ENCODE measurements at regions of chr14 and their contacts with region 1.

Region 1: GRCh38 chr14:75258615-75259466 is 19.8 kb upstream of the FOS start:
- DNase-seq: peak; percentile 100
- H3K4me3 ChIP-seq: peak overlapping the region; percentile 75
- H3K4me3 Mint-ChIP-seq: peak overlapping the region; percentile 77 to 95 (median 89)
- H3K27ac ChIP-seq: peak overlapping the region; percentile 99
- H3K27ac Mint-ChIP-seq: peak overlapping the region; percentile 99 to 100 (median 99)
- H3K4me1 ChIP-seq: peaks cover 24% of the 10 kb centered on the region
- H3K4me1 Mint-ChIP-seq: peaks cover 22 to 35% (median 31%) of the 10 kb centered on the region in 3 donors
- H3K27me3 ChIP-seq: no peaks in the 10 kb centered on the region
- H3K27me3 Mint-ChIP-seq: peaks cover 5 to 8% of the 10 kb centered on the region in 2 donors

Region 2: GRCh38 chr14:73713803-73714655 is 1544.8 kb before region 1 on chr14 and contains the start of gene PNMA1:
- CTCF ChIA-PET with region 1: no interaction called
- POLR2A ChIA-PET with region 1: no interaction called
- DNase-seq: peak; percentile 84 to 92 (median 86)
- H3K4me3 ChIP-seq: peak within 1 kb of the TSS; percentile 75
- H3K4me3 Mint-ChIP-seq: peak within 1 kb of the TSS; percentile 91 to 99 (median 95)
- H3K27ac ChIP-seq: peak within 1 kb of the TSS; percentile 64
- H3K27ac Mint-ChIP-seq: peak within 1 kb of the TSS; percentile 93 to 98 (median 98)
- H3K4me1 ChIP-seq: peaks cover 6% of the 10 kb centered on the region
- H3K4me1 Mint-ChIP-seq: peaks cover 29 to 36% (median 34%) of the 10 kb centered on the region in 3 donors
- H3K27me3 ChIP-seq: no peaks in the 10 kb centered on the region
- H3K27me3 Mint-ChIP-seq: no peaks in the 10 kb centered on the region
- total RNA-seq, gene PNMA1: 56.8 to 61.0 TPM

Region 3: GRCh38 chr14:74573421-74574089 is 685.3 kb before region 1 on chr14:
- CTCF ChIA-PET with region 1: no interaction called
- POLR2A ChIA-PET with region 1: interaction called, 11 read pairs
- DNase-seq: no peak
- H3K4me3 ChIP-seq: no peak overlapping the region
- H3K4me3 Mint-ChIP-seq: peak overlapping the region in 6 of 7 donors; percentile 3 to 68 (median 25)
- H3K27ac ChIP-seq: no peak overlapping the region
- H3K27ac Mint-ChIP-seq: peak overlapping the region in 4 of 8 donors; percentile 2 to 34 (median 20)
- H3K4me1 ChIP-seq: peaks cover 39% of the 10 kb centered on the region
- H3K4me1 Mint-ChIP-seq: peaks cover 38 to 43% (median 38%) of the 10 kb centered on the region in 3 donors
- H3K27me3 ChIP-seq: peaks cover 28% of the 10 kb centered on the region
- H3K27me3 Mint-ChIP-seq: peaks cover 25 to 28% of the 10 kb centered on the region in 2 donors

Region 4: GRCh38 chr14:74841230-74842207 is 417.3 kb before region 1 on chr14:
- CTCF ChIA-PET with region 1: no interaction called
- POLR2A ChIA-PET with region 1: no interaction called
- DNase-seq: peak in 1 of 5 donors; percentile 11
- H3K4me3 ChIP-seq: no peak overlapping the region
- H3K4me3 Mint-ChIP-seq: peak overlapping the region in 6 of 7 donors; percentile 26 to 42 (median 36)
- H3K27ac ChIP-seq: no peak overlapping the region
- H3K27ac Mint-ChIP-seq: peak overlapping the region; percentile 69 to 99 (median 90)
- H3K4me1 ChIP-seq: peaks cover 68% of the 10 kb centered on the region
- H3K4me1 Mint-ChIP-seq: peaks cover 51 to 62% (median 60%) of the 10 kb centered on the region in 3 donors
- H3K27me3 ChIP-seq: no peaks in the 10 kb centered on the region
- H3K27me3 Mint-ChIP-seq: no peaks in the 10 kb centered on the region

Region 5: GRCh38 chr14:75176142-75176820 is 82.6 kb before region 1 on chr14 and contains the start of gene TMED10:
- CTCF ChIA-PET with region 1: no interaction called
- POLR2A ChIA-PET with region 1: interaction called, 10 read pairs
- DNase-seq: peak; percentile 87 to 95 (median 94)
- H3K4me3 ChIP-seq: peak within 1 kb of the TSS; percentile 87
- H3K4me3 Mint-ChIP-seq: peak within 1 kb of the TSS; percentile 86 to 98 (median 90)
- H3K27ac ChIP-seq: peak within 1 kb of the TSS; percentile 98
- H3K27ac Mint-ChIP-seq: peak within 1 kb of the TSS; percentile 97 to 100 (median 98)
- H3K4me1 ChIP-seq: peaks cover 24% of the 10 kb centered on the region
- H3K4me1 Mint-ChIP-seq: peaks cover 32 to 55% (median 53%) of the 10 kb centered on the region in 3 donors
- H3K27me3 ChIP-seq: no peaks in the 10 kb centered on the region
- H3K27me3 Mint-ChIP-seq: no peaks in the 10 kb centered on the region
- total RNA-seq, gene TMED10: 178 TPM

Region 6: GRCh38 chr14:75230140-75231045 is 28.4 kb before region 1 on chr14:
- CTCF ChIA-PET with region 1: interaction called, 10 read pairs
- POLR2A ChIA-PET with region 1: interaction called, 3 read pairs
- DNase-seq: peak; percentile 44 to 82 (median 54)
- H3K4me3 ChIP-seq: peak overlapping the region; percentile 14
- H3K4me3 Mint-ChIP-seq: peak overlapping the region; percentile 2 to 76 (median 65)
- H3K27ac ChIP-seq: peak overlapping the region; percentile 45
- H3K27ac Mint-ChIP-seq: peak overlapping the region; percentile 66 to 98 (median 86)
- H3K4me1 ChIP-seq: peaks cover 58% of the 10 kb centered on the region
- H3K4me1 Mint-ChIP-seq: peaks cover 55 to 59% (median 58%) of the 10 kb centered on the region in 3 donors
- H3K27me3 ChIP-seq: no peaks in the 10 kb centered on the region
- H3K27me3 Mint-ChIP-seq: peaks cover 0 to 1% of the 10 kb centered on the region in 2 donors

Region 7: DNA sequence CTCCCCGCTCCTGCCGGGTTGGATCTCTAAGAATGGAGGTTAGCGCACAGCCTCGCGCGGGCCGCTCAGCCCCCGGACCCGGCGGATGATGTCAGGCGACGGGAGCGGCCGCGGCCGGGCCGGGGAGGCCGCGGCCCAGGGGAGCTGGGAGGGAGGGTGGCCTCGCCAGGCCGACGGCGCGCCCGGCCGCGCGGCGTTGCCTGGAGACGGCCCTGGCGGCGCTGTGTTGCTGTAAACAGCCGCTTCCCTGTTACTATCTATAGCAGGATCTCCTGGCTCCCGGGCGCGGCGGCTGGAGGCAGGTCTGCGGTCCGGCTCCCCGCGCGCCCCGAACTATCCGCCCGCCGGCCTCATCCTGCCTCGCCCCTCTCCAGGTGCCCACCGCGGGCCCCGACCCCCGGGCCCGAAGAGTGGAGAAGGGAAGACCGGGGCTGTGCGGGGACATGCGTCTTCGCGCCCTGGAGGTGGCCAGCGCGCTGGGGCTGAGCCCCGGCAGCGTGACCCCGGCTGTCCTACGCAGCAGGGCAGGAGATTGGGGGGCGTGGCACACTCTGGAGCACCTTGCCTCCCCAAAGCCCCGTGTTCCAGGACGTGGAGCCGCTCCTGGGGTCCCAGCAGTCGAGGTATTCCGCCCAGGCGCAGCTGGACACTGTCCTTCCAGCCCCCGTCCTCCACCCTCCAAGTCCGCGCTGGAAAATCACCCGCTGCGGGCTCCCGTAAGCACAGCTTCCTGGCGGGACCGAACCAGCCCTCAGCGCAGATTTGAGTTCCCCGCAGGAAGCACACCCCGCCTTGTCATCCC is 18.4 kb after region 1 on chr14:
- CTCF ChIA-PET with region 1: interaction called, 5 read pairs
- POLR2A ChIA-PET with region 1: interaction called, 12 read pairs
- DNase-seq: peak; percentile 68 to 88 (median 76)
- H3K4me3 ChIP-seq: peak overlapping the region; percentile 91
- H3K4me3 Mint-ChIP-seq: peak overlapping the region; percentile 91 to 99 (median 93)
- H3K27ac ChIP-seq: peak overlapping the region; percentile 92
- H3K27ac Mint-ChIP-seq: peak overlapping the region in 7 of 8 donors; percentile 94 to 100 (median 99)
- H3K4me1 ChIP-seq: peaks cover 61% of the 10 kb centered on the region
- H3K4me1 Mint-ChIP-seq: peaks cover 58 to 81% (median 71%) of the 10 kb centered on the region in 3 donors
- H3K27me3 ChIP-seq: peaks cover 29% of the 10 kb centered on the region
- H3K27me3 Mint-ChIP-seq: peaks cover 43 to 49% of the 10 kb centered on the region in 2 donors

Region 8: GRCh38 chr14:75323571-75323970 is 64.7 kb after region 1 on chr14:
- CTCF ChIA-PET with region 1: no interaction called
- POLR2A ChIA-PET with region 1: no interaction called
- DNase-seq: no peak
- H3K4me3 ChIP-seq: no peak overlapping the region
- H3K4me3 Mint-ChIP-seq: no peak overlapping the region
- H3K27ac ChIP-seq: no peak overlapping the region
- H3K27ac Mint-ChIP-seq: no peak overlapping the region
- H3K4me1 ChIP-seq: no peaks in the 10 kb centered on the region
- H3K4me1 Mint-ChIP-seq: no peaks in the 10 kb centered on the region
- H3K27me3 ChIP-seq: no peaks in the 10 kb centered on the region
- H3K27me3 Mint-ChIP-seq: peaks cover 6 to 15% of the 10 kb centered on the region in 2 donors

Measured in CD8-positive, alpha-beta memory T cell (primary cell).